Natural killer cell (primary cell): ENCODE measurements at regions of chr19 and their contacts with region 1.

Region 1: DNA sequence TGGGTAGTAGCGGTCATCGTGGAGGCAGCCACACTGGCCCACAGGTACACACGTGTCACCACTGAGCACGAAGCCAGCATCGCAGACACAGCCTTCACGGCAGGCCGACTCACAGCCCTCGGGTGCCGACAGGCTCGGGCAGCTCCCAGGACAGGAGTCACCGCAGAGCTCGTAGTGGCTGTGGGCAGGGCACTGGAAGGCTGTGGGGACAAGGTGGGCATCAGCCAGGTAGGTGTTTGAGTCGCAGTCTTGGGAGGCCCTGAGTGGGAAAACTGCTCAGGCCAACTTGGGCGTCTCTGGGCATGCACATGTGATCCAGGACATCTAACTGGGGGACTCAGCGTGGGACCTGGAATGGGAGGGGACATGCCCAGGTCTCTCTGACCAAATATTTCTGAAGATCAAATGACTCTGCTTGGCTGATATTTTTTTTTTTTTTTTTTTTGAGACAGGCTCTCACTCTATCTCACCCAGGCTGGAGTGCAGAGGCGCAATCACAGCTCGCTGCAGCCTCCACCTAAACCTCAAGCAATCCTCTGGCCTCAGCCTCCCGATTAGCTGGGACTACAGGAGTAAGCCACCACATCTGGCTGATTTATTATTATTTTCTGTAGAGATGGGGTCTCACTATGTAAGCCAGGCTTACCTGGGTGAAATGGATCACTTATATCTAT is 43.8 kb upstream of the FBL start:
- DNase-seq: no peak
- ATAC-seq: peak in 1 of 3 donors; percentile 14
- H3K4me3 ChIP-seq: no peak overlapping the region
- H3K4me3 Mint-ChIP-seq: no peak overlapping the region
- H3K27ac ChIP-seq: no peak overlapping the region
- H3K27ac Mint-ChIP-seq: no peak overlapping the region
- H3K4me1 ChIP-seq: peaks cover 20% of the 10 kb centered on the region
- H3K4me1 Mint-ChIP-seq: peaks cover 7 to 9% of the 10 kb centered on the region in 2 donors
- H3K27me3 ChIP-seq: no peaks in the 10 kb centered on the region
- H3K27me3 Mint-ChIP-seq: no peaks in the 10 kb centered on the region
- CTCF ChIP-seq: no peak

Region 2: DNA sequence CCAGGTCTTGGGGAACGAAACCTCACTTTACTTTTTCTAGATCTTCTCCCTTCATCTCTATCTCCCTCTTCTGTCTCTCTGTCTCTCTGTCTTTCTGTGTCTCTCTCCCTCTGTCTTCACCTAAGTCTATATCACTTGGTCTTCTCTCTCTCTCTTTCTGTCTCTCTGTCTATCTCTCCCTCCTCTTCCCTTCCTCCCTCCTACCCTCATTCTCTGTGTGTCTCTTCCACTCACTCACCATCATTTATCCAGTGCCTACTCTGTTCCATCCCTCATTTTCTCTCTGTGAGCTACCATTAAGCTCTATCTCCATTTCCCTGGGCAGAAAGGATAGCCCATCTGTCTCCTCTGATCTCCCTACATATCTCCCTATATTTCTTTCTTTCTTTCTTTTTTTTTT is 11.6 kb before region 1 on chr19:
- intact Hi-C with region 1: loop called (anchors 2 kb)
- DNase-seq: no peak
- ATAC-seq: no peak
- H3K4me3 ChIP-seq: no peak overlapping the region
- H3K4me3 Mint-ChIP-seq: no peak overlapping the region
- H3K27ac ChIP-seq: no peak overlapping the region
- H3K27ac Mint-ChIP-seq: no peak overlapping the region
- H3K4me1 ChIP-seq: peaks cover 5% of the 10 kb centered on the region
- H3K4me1 Mint-ChIP-seq: no peaks in the 10 kb centered on the region
- H3K27me3 ChIP-seq: no peaks in the 10 kb centered on the region
- H3K27me3 Mint-ChIP-seq: no peaks in the 10 kb centered on the region
- CTCF ChIP-seq: no peak